ENCODE measurements at regions of chr16 and their contacts with region 1.

Region 1: GRCh38 chr16:13453938-13454553 is 465.9 kb upstream of the ERCC4 start:
- DNase-seq: peak; percentile 48
- H3K4me3 ChIP-seq: no peak overlapping the region
- H3K27ac ChIP-seq: peak overlapping the region; percentile 50
- H3K4me1 ChIP-seq: peaks cover 15% of the 10 kb centered on the region
- H3K27me3 ChIP-seq: no peaks in the 10 kb centered on the region
- CTCF ChIP-seq: peak; percentile 67 to 69

Region 2: DNA sequence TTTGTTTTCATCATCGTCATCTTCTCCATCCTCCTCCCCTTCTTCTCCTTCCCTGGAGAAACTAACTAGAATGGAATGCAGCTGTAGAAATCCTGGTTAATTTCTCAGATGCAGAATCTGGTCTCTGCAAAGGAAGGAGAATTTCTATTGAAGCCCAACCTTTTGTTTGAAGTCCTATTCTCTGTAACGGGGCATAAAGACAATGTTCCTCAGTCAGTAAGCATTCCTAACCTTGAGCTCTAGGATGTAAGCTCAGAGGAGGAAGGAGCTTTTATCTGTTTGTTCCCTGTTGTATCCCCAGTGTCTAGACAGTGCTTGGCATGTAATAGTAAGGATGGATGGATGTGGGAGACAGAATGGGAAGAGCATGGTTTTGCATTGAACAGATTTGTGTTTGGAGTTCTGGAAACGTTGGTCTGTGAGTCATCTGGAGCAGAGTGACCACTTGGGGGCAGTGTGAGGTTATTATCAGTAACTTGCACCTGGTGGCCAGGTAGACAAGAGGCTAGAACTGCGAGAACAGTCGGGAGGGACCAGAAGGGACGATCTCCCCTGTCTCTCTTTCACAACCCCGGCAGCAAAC is 1113.8 kb before region 1 on chr16:
- CTCF ChIA-PET with region 1: no interaction called
- dilution Hi-C with region 1: no loop called
- in situ Hi-C with region 1: no loop called
- intact Hi-C with region 1: loop called (anchors 5 kb)
- DNase-seq: peak; percentile 59
- H3K4me3 ChIP-seq: no peak overlapping the region
- H3K27ac ChIP-seq: no peak overlapping the region
- H3K4me1 ChIP-seq: peaks cover 8% of the 10 kb centered on the region
- H3K27me3 ChIP-seq: no peaks in the 10 kb centered on the region
- CTCF ChIP-seq: peak; percentile 39 to 57

Region 3: GRCh38 chr16:12803203-12804097 is 650.6 kb before region 1 on chr16 and contains the start of gene CPPED1:
- CTCF ChIA-PET with region 1: no interaction called
- dilution Hi-C with region 1: no loop called
- in situ Hi-C with region 1: no loop called
- intact Hi-C with region 1: loop called (anchors 10 kb)
- DNase-seq: peak; percentile 94
- H3K4me3 ChIP-seq: peak within 1 kb of the TSS; percentile 46 to 82 (median 73)
- H3K27ac ChIP-seq: peak within 1 kb of the TSS; percentile 45
- H3K4me1 ChIP-seq: peaks cover 9% of the 10 kb centered on the region
- H3K27me3 ChIP-seq: no peaks in the 10 kb centered on the region
- CTCF ChIP-seq: no peak
- total RNA-seq, gene CPPED1: 12.8 to 19.9 TPM

Region 4: DNA sequence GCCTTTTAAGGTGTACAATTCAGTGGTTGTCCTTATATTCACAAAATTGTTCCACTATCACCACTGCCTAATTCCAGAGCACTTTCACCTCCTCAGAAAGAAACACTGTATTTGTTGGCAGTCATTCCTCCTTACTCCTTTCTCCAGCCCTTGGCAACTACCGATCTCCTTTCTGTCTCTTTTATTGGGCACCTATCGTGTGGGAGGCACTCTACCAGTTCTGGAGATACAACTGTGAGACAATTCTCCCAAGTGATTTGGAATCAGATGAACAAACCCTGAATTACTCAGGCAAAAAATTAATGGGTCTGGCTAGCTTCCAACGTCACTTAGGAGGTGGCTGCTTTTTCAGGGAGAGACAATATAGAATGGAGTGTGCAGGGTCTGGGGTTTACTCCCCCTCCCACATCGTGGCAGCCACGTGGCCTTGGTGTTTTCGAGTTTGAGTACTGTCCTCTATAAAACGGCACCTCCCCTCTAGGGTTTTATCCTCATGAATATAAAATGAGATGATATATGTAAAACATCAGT is 488.7 kb before region 1 on chr16:
- CTCF ChIA-PET with region 1: no interaction called
- dilution Hi-C with region 1: no loop called
- in situ Hi-C with region 1: no loop called
- intact Hi-C with region 1: loop called (anchors 10 kb)
- DNase-seq: no peak
- H3K4me3 ChIP-seq: no peak overlapping the region
- H3K27ac ChIP-seq: no peak overlapping the region
- H3K4me1 ChIP-seq: no peaks in the 10 kb centered on the region
- H3K27me3 ChIP-seq: no peaks in the 10 kb centered on the region
- CTCF ChIP-seq: no peak

Region 5: DNA sequence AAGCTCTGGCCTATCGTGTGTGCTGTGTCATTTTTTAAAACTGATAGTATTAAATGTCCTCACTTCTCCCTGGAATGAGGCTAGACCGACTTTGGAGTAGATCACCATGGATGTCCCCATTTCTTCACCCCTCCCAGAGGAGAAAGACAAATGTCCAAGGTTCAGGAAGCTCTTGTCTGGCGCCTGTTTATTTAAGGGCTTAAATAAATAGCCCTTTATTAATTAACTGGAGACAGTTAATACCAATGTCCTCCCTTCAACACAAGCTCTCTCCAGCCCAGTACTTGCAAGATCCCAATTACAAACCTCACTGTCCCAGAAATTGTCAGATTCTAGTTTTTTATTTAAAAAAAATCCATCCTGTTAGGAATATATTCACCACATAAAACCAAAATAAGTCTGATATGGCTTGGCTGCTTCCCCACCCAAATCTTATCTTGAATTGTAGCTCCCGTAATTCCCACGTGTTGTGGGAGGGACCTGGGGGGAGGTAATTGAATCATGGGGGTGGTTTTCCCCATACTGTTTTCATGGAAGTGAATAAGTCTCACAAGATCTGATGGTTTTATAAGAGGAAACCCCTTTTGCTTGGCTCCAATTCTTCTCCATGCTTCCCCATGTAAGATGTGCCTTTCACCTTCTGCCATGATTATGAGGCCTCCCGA is 208.2 kb before region 1 on chr16:
- CTCF ChIA-PET with region 1: no interaction called
- dilution Hi-C with region 1: no loop called
- in situ Hi-C with region 1: no loop called
- intact Hi-C with region 1: loop called (anchors 10 kb)
- DNase-seq: no peak
- H3K4me3 ChIP-seq: no peak overlapping the region
- H3K27ac ChIP-seq: no peak overlapping the region
- H3K4me1 ChIP-seq: no peaks in the 10 kb centered on the region
- H3K27me3 ChIP-seq: no peaks in the 10 kb centered on the region
- CTCF ChIP-seq: no peak

Region 6: DNA sequence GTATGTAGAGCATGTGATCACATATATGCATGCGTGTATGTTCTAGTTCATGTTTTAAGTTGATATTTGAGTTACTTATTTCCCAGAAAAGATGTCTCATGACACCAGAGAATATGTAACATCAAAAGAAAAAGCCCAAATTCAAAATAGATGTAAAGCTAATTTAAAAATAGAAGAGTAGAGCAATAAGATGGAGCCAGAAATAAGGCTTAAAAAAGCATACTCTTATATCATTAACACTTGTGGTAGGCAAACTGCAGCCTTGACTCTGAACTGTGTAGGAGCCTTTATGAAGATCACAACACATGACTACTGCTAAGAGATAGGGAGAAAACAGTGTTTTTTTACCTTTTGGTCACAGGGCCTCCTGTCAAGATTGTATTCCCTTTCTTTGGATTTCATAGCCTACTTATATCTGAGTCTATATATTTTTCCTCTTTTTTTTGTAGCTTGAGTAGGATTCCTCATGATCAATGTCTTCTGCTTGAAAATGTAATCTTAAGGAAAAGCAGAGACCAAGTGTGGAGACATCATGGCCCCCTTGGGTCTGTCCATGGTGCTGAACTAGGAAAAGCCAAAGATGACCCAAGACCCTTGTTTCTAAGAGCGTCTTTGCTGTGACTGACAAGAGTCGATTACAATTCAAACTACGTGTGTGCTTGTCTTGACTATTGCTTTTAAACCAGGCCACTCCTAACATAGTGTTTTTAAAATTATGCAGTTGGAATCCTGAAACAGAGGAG is 162.3 kb before region 1 on chr16:
- CTCF ChIA-PET with region 1: no interaction called
- dilution Hi-C with region 1: no loop called
- in situ Hi-C with region 1: no loop called
- intact Hi-C with region 1: no loop called
- DNase-seq: no peak
- H3K4me3 ChIP-seq: no peak overlapping the region
- H3K27ac ChIP-seq: no peak overlapping the region
- H3K4me1 ChIP-seq: peaks cover 4% of the 10 kb centered on the region
- H3K27me3 ChIP-seq: no peaks in the 10 kb centered on the region
- CTCF ChIP-seq: no peak

Region 7: GRCh38 chr16:13376174-13376573 is 77.9 kb before region 1 on chr16:
- CTCF ChIA-PET with region 1: no interaction called
- dilution Hi-C with region 1: no loop called
- in situ Hi-C with region 1: no loop called
- intact Hi-C with region 1: loop called (anchors 2 kb)
- DNase-seq: peak; percentile 71
- H3K4me3 ChIP-seq: no peak overlapping the region
- H3K27ac ChIP-seq: no peak overlapping the region
- H3K4me1 ChIP-seq: peaks cover 9% of the 10 kb centered on the region
- H3K27me3 ChIP-seq: no peaks in the 10 kb centered on the region
- CTCF ChIP-seq: no peak